ENCODE measurements at regions of chr9 and their contacts with region 1.

Region 1: GRCh38 chr9:95852059-95853032 is 23.1 kb upstream of the ERCC6L2 start:
- DNase-seq: no peak
- ATAC-seq: peak; percentile 79
- H3K4me3 Mint-ChIP-seq: peak overlapping the region; percentile 29
- H3K27ac Mint-ChIP-seq: peak overlapping the region; percentile 67
- H3K4me1 Mint-ChIP-seq: peaks cover 26% of the 10 kb centered on the region
- H3K27me3 Mint-ChIP-seq: no peaks in the 10 kb centered on the region
- CTCF ChIP-seq: no peak

Region 2: GRCh38 chr9:95264954-95265615 is 587.3 kb before region 1 on chr9:
- CTCF ChIA-PET with region 1: no interaction called
- POLR2A ChIA-PET with region 1: no interaction called
- intact Hi-C with region 1: no loop called
- DNase-seq: no peak
- ATAC-seq: no peak
- H3K4me3 Mint-ChIP-seq: no peak overlapping the region
- H3K27ac Mint-ChIP-seq: no peak overlapping the region
- H3K4me1 Mint-ChIP-seq: peaks cover 21% of the 10 kb centered on the region
- H3K27me3 Mint-ChIP-seq: no peaks in the 10 kb centered on the region
- CTCF ChIP-seq: no peak

Region 3: DNA sequence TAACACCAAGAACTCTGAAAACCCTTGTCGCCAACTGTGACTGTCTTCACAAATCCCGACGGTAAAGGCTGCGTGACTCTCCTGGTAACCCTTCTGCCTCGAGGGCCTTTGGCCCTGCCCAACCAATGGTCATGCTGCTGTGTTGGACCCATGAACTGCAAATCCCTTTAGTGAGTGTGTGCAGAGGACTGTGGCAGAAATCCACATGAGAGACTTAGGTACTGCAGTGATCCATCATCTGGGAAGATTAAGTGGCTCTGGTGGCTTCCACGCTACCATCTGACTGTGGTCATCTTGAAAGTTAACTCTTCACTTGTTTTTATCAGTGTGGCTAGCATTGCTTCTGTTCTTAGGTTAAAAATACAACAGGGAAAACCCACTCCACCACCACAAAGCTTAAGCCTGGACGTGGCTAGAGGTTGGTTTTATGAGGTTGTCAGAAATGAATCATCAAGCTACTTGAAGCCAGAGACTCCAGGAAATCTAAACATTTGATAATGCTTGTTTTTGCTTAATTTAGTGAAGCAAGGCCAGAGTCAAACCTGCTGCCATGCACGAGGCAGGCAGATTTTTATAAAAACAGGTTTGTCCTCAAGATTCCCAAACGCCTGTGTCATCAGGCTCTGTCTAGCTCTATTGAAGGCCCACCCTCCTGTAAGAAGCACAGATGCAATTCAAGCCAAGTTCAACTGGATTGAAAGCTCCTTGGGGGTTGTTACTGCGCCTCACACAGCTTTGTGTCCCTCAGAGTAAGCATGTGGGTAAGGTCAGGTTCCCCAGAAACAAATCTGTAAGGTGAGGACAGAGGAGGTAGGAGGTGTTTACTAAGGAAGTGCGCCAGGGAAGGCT is 29.5 kb before region 1 on chr9:
- CTCF ChIA-PET with region 1: no interaction called
- POLR2A ChIA-PET with region 1: interaction called, 7 read pairs
- intact Hi-C with region 1: loop called (anchors 1 kb)
- DNase-seq: no peak
- ATAC-seq: peak; percentile 69
- H3K4me3 Mint-ChIP-seq: peak overlapping the region; percentile 9
- H3K27ac Mint-ChIP-seq: peak overlapping the region; percentile 65
- H3K4me1 Mint-ChIP-seq: peaks cover 15% of the 10 kb centered on the region
- H3K27me3 Mint-ChIP-seq: no peaks in the 10 kb centered on the region
- CTCF ChIP-seq: no peak

Region 4: DNA sequence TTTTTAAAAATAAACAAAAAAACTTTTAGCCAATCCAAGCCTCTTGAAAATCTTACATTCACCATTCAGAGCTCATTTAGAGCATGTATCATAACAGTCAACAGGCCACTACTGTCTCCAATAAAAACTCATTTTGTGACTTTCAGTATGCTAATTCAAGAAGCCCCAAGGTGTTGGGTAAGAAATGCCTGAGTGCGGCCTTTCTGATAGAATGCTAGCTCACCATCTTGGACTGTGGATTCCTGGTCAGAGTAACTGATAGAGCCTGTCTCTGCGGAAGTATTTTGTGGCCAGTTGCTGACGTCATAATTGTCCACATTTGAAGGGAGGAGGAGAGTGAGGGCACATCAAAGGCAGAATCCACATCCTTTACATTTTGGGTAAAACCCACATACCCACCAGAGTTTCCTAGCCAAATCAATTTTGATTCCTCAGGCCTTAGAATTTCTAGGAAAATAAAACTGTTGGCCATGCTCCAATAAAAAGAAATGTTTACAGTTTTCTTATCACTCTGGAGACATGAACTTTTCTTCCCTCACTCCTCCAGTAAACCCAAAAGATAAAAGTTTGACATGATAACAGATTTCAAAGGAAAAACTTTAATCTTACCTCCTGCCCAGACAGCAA is 18.0 kb before region 1 on chr9:
- CTCF ChIA-PET with region 1: no interaction called
- POLR2A ChIA-PET with region 1: no interaction called
- intact Hi-C with region 1: no loop called
- DNase-seq: no peak
- ATAC-seq: no peak
- H3K4me3 Mint-ChIP-seq: no peak overlapping the region
- H3K27ac Mint-ChIP-seq: no peak overlapping the region
- H3K4me1 Mint-ChIP-seq: no peaks in the 10 kb centered on the region
- H3K27me3 Mint-ChIP-seq: no peaks in the 10 kb centered on the region
- CTCF ChIP-seq: no peak